ENCODE measurements at regions of chr12 and their contacts with region 1.

Region 1: DNA sequence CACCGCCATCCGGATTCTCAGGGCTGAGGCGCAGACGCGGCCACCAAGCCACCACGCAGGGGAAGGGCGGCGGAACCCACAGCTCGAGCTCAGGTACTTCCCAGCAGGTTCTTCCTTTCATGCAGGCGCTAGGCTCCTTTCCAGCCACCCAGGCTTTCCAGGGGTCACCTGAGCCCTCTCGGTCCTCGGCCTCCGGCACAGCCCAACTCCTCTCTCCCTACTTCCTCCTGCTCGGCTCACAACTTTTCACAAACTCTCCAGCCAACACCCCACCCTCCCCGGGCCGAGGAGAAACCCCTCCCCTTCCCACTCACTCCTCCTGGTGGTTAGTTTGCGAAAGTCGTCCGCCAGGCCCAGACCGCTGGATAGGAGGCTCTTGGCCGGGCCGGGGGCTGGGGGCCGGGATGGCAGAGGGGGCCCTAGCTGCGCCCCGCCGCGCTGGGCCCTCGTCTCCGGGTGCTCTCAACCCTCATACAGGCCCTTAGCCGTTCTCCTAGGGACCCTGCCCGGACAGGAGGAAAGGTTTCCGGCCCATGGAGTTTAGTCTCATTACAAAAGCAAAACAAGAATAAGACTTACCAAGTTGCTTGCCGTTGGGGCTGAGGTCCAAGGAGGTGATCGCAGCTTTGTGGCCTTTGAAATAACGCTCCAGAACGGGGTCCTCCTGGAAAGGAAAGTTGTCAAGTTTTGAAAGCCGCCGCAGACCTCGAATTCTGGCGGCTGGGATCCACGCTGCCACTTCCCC is at the start of gene GALNT4:
- DNase-seq: peak; percentile 86
- H3K4me3 ChIP-seq: peak within 1 kb of the TSS; percentile 71 to 94
- H3K27ac ChIP-seq: peak within 1 kb of the TSS; percentile 86 to 88
- H3K4me1 ChIP-seq: no peaks in the 10 kb centered on the region
- H3K27me3 ChIP-seq: no peaks in the 10 kb centered on the region
- CTCF ChIP-seq: peak; percentile 55 to 76 (median 66)
- POLR2A ChIP-seq: peak; percentile 64
- total RNA-seq, gene GALNT4: 4.1 to 8.4 TPM

Region 2: GRCh38 chr12:89019408-89020120 is 505.1 kb before region 1 on chr12:
- intact Hi-C with region 1: loop called (anchors 2 kb)
- DNase-seq: peak; percentile 71
- H3K4me3 ChIP-seq: no peak overlapping the region
- H3K27ac ChIP-seq: no peak overlapping the region
- H3K4me1 ChIP-seq: no peaks in the 10 kb centered on the region
- H3K27me3 ChIP-seq: no peaks in the 10 kb centered on the region
- CTCF ChIP-seq: peak; percentile 48 to 79 (median 60)
- POLR2A ChIP-seq: no peak

Region 3: DNA sequence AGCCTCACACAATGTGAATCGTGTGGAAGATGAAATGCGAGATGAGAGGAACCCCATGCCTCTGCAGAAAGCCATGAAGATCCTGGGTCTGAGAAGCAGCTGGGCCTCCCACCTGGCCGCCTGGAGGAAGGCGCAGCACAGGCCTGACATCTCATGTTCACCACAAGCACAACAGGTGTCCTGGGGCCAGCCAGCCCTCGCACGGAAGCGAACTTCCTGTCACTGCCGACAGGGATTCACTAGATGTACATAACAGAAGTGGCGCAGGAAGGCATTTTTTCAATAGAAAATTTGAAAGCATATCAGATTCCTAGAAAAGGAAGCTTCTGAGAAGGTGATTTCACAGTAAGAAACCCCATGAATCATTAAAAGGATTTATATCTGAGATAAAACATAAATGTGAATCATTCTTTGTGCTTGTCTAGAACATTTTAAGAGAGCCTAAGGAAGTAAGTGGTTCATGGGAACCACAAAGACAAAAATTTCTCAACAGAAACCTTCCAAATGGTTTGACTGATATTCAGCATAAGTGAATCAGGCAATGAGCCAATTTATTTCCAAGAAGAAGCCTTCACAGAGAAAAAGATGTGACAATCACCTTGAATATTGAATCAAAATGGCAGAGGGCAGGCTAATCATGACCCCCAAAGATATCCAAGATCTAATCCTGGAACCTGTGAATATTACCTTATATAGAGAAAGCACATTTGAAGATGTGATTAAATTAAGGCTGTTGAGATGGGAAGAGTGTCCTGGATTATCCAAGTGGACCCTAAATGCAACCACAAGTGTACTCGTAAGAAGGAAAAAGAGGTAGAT is 484.4 kb before region 1 on chr12:
- intact Hi-C with region 1: loop called (anchors 10 kb)
- DNase-seq: no peak
- H3K4me3 ChIP-seq: no peak overlapping the region
- H3K27ac ChIP-seq: no peak overlapping the region
- H3K4me1 ChIP-seq: no peaks in the 10 kb centered on the region
- H3K27me3 ChIP-seq: no peaks in the 10 kb centered on the region
- CTCF ChIP-seq: no peak
- POLR2A ChIP-seq: no peak

Region 4: GRCh38 chr12:89461649-89462612 is 62.8 kb before region 1 on chr12:
- intact Hi-C with region 1: loop called (anchors 5 kb)
- DNase-seq: no peak
- H3K4me3 ChIP-seq: no peak overlapping the region
- H3K27ac ChIP-seq: no peak overlapping the region
- H3K4me1 ChIP-seq: no peaks in the 10 kb centered on the region
- H3K27me3 ChIP-seq: no peaks in the 10 kb centered on the region
- CTCF ChIP-seq: peak in 3 of 4 experiments; percentile 75 to 86 (median 81)
- POLR2A ChIP-seq: no peak

Region 5: GRCh38 chr12:89477633-89478279 is 47.0 kb before region 1 on chr12:
- intact Hi-C with region 1: loop called (anchors 2 kb)
- DNase-seq: no peak
- H3K4me3 ChIP-seq: no peak overlapping the region
- H3K27ac ChIP-seq: no peak overlapping the region
- H3K4me1 ChIP-seq: no peaks in the 10 kb centered on the region
- H3K27me3 ChIP-seq: no peaks in the 10 kb centered on the region
- CTCF ChIP-seq: no peak
- POLR2A ChIP-seq: no peak